Activated CD8-positive, alpha-beta memory T cell treated with anti-CD3 and anti-CD28 coated beads, Interleukin-2, amount 10 ng/mL, durations not matched to agents 7 days and 5 days (primary cell): ENCODE measurements at regions of chr10 and their contacts with region 1.

Region 1: GRCh38 chr10:70602665-70603448 is at the start of gene PRF1:
- DNase-seq: peak; percentile 98
- ATAC-seq: peak; percentile 93
- H3K4me3 Mint-ChIP-seq: peak within 1 kb of the TSS; percentile 96
- H3K27ac Mint-ChIP-seq: peak within 1 kb of the TSS; percentile 95
- H3K4me1 Mint-ChIP-seq: peaks cover 60% of the 10 kb centered on the region
- H3K27me3 Mint-ChIP-seq: no peaks in the 10 kb centered on the region
- total RNA-seq, gene PRF1: 381 to 433 TPM

Region 2: GRCh38 chr10:70575874-70576802 is 26.7 kb before region 1 on chr10:
- CTCF ChIA-PET with region 1: interaction called, 12 read pairs
- DNase-seq: peak; percentile 86
- ATAC-seq: peak; percentile 31
- H3K4me3 Mint-ChIP-seq: peak overlapping the region; percentile 63
- H3K27ac Mint-ChIP-seq: peak overlapping the region; percentile 98
- H3K4me1 Mint-ChIP-seq: peaks cover 59% of the 10 kb centered on the region
- H3K27me3 Mint-ChIP-seq: no peaks in the 10 kb centered on the region

Region 3: GRCh38 chr10:70619271-70620019 is 16.6 kb after region 1 on chr10:
- CTCF ChIA-PET with region 1: interaction called, 50 read pairs
- DNase-seq: no peak
- ATAC-seq: no peak
- H3K4me3 Mint-ChIP-seq: no peak overlapping the region
- H3K27ac Mint-ChIP-seq: peak overlapping the region; percentile 69
- H3K4me1 Mint-ChIP-seq: peaks cover 46% of the 10 kb centered on the region
- H3K27me3 Mint-ChIP-seq: no peaks in the 10 kb centered on the region